Mammary epithelial cell (primary cell): ENCODE measurements at regions of chr4 and their contacts with region 1.

Region 1: DNA sequence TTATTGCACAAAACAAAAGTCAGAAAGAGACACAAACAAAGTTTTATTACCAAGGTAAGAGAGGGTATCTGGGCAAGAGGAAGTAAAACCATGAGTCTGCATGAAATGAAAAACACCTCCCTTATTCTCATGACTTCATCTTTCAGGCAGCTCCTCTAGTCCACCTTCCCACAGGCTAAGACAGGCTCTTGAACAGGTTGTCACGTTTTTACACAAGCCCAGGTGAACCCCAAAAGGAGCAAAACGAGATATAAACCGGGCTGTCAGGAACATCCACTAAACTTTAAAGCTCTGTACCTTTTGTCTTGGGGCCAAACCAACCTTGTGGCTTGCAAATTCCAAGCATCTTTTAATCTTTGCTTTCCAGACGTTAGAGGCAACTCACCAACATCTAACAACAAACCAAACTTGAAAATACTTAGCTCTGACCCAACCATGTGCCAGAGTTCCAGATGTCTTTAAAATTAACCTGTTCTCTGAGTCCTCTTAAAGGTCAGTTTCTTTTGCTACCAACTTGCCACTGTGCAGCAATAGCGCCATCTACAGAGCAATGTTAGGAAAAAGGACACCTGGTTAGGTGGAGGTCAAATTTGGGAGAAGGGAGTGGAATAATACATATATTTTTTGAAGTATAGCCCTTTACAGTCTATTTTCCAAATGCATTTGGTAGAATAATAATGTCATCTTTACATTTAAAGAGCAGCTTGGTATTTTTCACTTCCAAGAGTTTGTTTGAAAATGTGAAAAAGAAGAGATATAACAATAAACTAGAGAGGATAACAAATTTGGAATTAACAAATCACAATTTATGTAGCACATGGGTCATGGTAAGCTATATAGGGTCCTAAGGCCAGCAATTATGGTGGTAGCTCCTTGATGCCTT is 73.1 kb downstream of the QRFPR start:
- DNase-seq: peak; percentile 63
- H3K4me3 ChIP-seq: no peak overlapping the region
- H3K27ac ChIP-seq: no peak overlapping the region
- H3K4me1 ChIP-seq: peaks cover 11% of the 10 kb centered on the region
- H3K27me3 ChIP-seq: no peaks in the 10 kb centered on the region
- CTCF ChIP-seq: peak; percentile 87 to 92

Region 2: DNA sequence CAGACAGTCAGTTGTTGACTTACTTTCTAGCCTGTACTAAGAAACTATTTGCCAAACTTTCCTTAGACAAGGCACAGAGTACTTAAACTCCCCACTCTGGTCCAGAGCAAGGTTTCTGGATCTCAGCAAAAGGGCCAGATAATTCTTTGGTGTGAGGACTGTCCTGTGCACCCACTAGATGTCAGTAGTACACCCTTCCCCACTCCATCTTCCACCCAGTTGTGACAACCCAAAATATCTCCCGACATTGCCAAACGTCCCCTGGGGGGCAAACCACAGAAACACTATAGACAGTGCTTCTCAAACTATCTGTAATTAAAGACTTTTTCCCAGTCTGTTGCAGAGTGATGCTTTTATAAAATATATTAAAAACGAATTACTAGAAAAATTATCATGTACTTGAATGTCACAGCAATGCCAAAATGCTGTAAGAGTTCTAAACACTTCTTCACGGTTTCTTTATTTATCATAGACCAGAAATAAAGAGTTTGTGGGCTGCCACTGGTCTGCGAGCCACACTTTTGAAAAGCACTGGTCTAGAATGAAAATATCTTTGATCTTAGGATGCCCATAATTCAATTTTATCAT is 588.6 kb before region 1 on chr4:
- CTCF ChIA-PET with region 1: no interaction called
- dilution Hi-C with region 1: no loop called
- in situ Hi-C with region 1: no loop called
- intact Hi-C with region 1: loop called (anchors 5 kb)
- DNase-seq: peak; percentile 11
- H3K4me3 ChIP-seq: no peak overlapping the region
- H3K27ac ChIP-seq: no peak overlapping the region
- H3K4me1 ChIP-seq: no peaks in the 10 kb centered on the region
- H3K27me3 ChIP-seq: no peaks in the 10 kb centered on the region
- CTCF ChIP-seq: peak; percentile 61 to 77

Region 3: GRCh38 chr4:121112530-121112929 is 195.2 kb before region 1 on chr4:
- CTCF ChIA-PET with region 1: interaction called, 3 read pairs
- dilution Hi-C with region 1: no loop called
- in situ Hi-C with region 1: no loop called
- intact Hi-C with region 1: loop called (anchors 10 kb)
- DNase-seq: no peak
- H3K4me3 ChIP-seq: no peak overlapping the region
- H3K27ac ChIP-seq: no peak overlapping the region
- H3K4me1 ChIP-seq: no peaks in the 10 kb centered on the region
- H3K27me3 ChIP-seq: peaks cover 4% of the 10 kb centered on the region
- CTCF ChIP-seq: peak; percentile 39 to 45

Region 4: GRCh38 chr4:121252224-121252806 is 55.4 kb before region 1 on chr4:
- CTCF ChIA-PET with region 1: no interaction called
- dilution Hi-C with region 1: no loop called
- in situ Hi-C with region 1: no loop called
- intact Hi-C with region 1: loop called (anchors 1 kb)
- DNase-seq: peak; percentile 55
- H3K4me3 ChIP-seq: no peak overlapping the region
- H3K27ac ChIP-seq: no peak overlapping the region
- H3K4me1 ChIP-seq: peaks cover 15% of the 10 kb centered on the region
- H3K27me3 ChIP-seq: no peaks in the 10 kb centered on the region
- CTCF ChIP-seq: peak; percentile 90

Region 5: GRCh38 chr4:121380776-121381462 is 73.2 kb after region 1 on chr4 and contains the start of gene QRFPR:
- CTCF ChIA-PET with region 1: no interaction called
- dilution Hi-C with region 1: no loop called
- in situ Hi-C with region 1: no loop called
- intact Hi-C with region 1: loop called (anchors 5 kb)
- DNase-seq: peak; percentile 71
- H3K4me3 ChIP-seq: peak within 1 kb of the TSS; percentile 55 to 85 (median 75)
- H3K27ac ChIP-seq: peak within 1 kb of the TSS; percentile 61
- H3K4me1 ChIP-seq: peaks cover 25% of the 10 kb centered on the region
- H3K27me3 ChIP-seq: no peaks in the 10 kb centered on the region
- CTCF ChIP-seq: peak in 1 of 2 donors; percentile 38
- total RNA-seq, gene QRFPR: 4.3 to 7.8 TPM